ENCODE measurements at regions of chr5 and their contacts with region 1.

Region 1: DNA sequence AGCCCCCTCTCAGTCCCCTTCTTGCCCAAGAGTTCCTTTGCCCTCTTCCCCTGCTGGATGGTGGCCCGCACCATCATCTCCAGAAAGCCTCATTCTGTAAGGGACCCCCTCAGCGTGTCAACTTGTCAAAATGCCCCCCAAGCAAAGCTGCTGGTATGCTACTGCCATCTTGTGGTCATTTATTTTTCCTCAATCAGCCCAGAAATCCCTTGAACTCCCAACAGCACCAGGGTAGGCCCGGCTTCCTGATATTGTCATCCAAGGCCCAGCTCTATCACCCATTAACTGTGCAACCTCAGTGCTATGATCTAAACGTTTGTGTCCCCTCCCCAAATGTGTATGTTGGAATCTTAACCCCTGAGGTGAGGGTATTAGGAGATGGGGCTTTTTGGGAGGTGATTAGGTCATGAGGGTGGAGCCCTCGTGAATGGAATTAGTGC is 53.2 kb upstream of the FBXW11 start:
- DNase-seq: peak; percentile 56
- H3K4me3 ChIP-seq: no peak overlapping the region
- H3K27ac ChIP-seq: no peak overlapping the region
- H3K4me1 ChIP-seq: no peaks in the 10 kb centered on the region
- H3K27me3 ChIP-seq: no peaks in the 10 kb centered on the region
- CTCF ChIP-seq: peak; percentile 69
- EP300 ChIP-seq: no peak
- RAD21 ChIP-seq: peak; percentile 62

Region 2: DNA sequence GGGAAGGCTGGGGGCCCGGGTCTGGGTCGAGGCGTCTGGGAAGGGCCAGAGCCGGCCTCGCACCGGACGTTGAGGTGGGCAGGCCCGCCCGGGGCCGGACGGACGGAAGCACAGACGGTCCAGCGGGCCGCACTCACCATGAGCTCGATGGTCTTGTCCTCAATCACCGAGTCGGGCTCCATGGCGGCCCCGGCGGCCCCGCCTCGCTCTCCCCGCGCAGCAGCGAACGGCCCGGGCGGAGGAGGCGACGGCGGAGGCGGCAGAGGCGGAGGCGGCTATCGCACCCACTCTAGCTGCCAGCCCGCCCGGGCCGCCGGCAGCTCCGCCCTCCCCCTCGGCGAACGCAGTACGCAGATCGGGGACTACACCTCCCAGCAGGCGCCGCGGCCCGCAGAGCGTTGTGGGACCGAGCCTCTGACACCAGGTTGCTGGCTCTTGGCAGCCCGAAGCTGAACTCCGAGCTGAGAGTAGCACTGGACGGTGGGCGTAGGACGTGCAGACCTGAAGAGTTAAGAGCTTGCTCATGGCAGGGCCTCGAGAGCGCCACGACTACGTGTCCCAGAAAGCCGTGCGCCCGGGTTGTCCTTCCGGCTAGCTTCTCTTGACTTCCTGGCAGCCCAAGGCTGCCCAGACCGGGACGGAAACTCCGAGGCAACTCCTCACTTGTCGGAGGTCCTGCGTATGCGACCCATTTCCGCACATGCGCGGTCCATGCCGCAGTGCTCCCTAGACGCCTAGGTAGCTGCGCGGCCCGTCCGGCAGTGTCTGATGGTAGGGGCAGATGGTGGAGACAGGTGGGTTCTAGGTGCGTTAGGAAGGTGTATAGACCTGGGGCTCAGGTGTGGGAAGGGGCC is 53.1 kb before region 1 on chr5 and contains the start of gene FBXW11:
- CTCF ChIA-PET with region 1: interaction called, 13 read pairs
- POLR2A ChIA-PET with region 1: interaction called, 5 read pairs
- DNase-seq: peak; percentile 93
- H3K4me3 ChIP-seq: peak within 1 kb of the TSS; percentile 85 to 94
- H3K27ac ChIP-seq: peak within 1 kb of the TSS; percentile 97 to 98
- H3K4me1 ChIP-seq: peaks cover 17 to 20% of the 10 kb centered on the region in 2 experiments
- H3K27me3 ChIP-seq: no peaks in the 10 kb centered on the region
- CTCF ChIP-seq: no peak
- EP300 ChIP-seq: no peak
- RAD21 ChIP-seq: no peak
- polyA plus RNA-seq, gene FBXW11: 37.5 and 51.1 TPM in 2 replicates

Region 3: GRCh38 chr5:172044631-172045314 is 14.9 kb before region 1 on chr5:
- CTCF ChIA-PET with region 1: interaction called, 11 read pairs
- POLR2A ChIA-PET with region 1: no interaction called
- DNase-seq: no peak
- H3K4me3 ChIP-seq: no peak overlapping the region
- H3K27ac ChIP-seq: no peak overlapping the region
- H3K4me1 ChIP-seq: no peaks in the 10 kb centered on the region
- H3K27me3 ChIP-seq: no peaks in the 10 kb centered on the region
- CTCF ChIP-seq: no peak
- EP300 ChIP-seq: no peak
- RAD21 ChIP-seq: no peak

Measured in SK-N-SH (cell line).